Calu3 (cell line): ENCODE measurements at regions of chr13 and their contacts with region 1.

Region 1: DNA sequence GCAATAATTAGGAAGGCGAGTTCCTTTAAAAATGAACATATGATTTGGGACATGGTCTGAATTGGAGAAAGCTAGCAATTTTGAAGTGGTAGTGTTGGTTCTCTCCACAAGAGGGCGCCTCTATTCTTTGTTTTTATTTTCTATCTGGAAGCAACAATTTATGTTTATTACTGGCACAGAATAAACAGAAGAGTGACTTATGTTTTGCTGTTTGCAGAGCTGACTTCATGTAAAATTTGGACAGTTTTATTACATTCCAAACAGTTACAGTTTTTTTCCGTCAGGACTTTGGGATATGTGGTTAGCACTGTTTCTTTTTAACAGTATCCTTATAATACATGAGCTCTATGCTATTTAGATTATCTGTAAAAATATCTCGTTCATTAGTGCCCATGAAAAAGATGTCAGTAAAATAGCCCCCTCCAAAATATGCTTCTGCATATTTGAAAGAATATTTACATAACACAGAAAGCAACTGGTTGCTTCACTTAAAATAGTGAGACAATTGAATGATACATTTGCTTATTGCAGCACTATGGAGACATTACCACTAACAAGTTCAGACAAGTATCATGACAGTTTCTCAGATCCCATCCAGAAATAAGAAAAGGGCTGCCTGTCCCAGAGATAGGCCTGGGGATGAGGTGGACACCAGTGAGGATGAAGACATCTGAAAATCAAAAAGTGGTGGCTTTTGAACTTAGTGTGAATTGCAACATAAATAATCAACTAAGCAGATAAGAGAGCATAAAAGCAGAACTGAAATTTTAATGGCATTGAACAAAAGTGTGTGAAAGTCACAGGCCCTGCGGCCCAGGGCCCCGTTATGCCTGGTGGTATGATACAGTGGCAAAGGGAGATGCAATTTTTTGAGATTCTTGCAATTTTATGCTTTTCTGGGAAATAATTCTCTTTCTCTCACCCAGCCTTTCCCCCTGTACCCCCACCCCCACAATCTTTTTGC is 32.3 kb upstream of the FGF9 start:
- DNase-seq: peak; percentile 27
- H3K4me3 Mint-ChIP-seq: no peak overlapping the region
- H3K27ac Mint-ChIP-seq: no peak overlapping the region
- H3K4me1 Mint-ChIP-seq: peaks cover 25% of the 10 kb centered on the region
- H3K27me3 Mint-ChIP-seq: no peaks in the 10 kb centered on the region
- CTCF ChIP-seq: peak; percentile 15

Region 2: DNA sequence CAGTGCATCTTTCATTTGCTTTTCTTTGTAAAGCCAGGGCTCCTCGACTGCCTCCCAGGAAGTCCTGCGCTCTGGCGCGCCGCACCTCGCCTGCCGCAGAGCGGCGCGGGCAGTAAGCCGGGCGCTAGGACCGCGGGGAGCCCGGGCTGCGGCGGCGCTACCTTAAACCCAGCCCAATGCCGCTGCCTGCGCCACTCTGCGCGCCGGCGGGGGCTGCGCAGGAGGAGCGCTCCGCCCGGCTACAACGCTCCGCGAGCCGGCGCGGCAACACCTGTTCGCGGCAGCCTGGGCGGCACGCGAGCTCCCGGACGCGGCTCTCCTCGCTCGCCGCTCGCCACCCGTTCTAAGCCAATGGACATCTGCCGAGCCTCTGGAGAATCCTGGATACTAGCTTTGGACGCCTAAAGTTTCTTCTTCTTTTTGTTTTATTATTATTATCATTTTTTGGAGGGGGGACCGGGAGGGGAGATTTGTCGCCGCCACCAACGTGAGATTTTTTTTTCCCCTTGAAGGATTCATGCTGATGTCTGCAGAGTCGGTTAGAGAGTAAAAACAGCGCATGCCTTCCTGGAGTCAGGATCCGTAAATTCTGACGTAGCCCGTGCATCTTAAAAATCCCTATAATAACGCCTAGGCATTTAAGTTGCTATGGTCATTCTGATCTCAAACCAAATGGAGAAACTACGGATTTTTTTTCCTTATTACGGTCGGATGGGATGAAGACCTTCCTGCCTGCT is 32.5 kb after region 1 on chr13 and contains the start of gene FGF9:
- CTCF ChIA-PET with region 1: interaction called, 4 read pairs
- intact Hi-C with region 1: loop called (anchors 2 kb)
- DNase-seq: peak; percentile 68
- H3K4me3 Mint-ChIP-seq: peak within 1 kb of the TSS; percentile 84
- H3K27ac Mint-ChIP-seq: no peak within 1 kb of the TSS
- H3K4me1 Mint-ChIP-seq: peaks cover 10% of the 10 kb centered on the region
- H3K27me3 Mint-ChIP-seq: peaks cover 75% of the 10 kb centered on the region
- CTCF ChIP-seq: no peak
- total RNA-seq, gene FGF9: 0.32 TPM in 1 of 2 replicates, not detected in the other

Region 3: DNA sequence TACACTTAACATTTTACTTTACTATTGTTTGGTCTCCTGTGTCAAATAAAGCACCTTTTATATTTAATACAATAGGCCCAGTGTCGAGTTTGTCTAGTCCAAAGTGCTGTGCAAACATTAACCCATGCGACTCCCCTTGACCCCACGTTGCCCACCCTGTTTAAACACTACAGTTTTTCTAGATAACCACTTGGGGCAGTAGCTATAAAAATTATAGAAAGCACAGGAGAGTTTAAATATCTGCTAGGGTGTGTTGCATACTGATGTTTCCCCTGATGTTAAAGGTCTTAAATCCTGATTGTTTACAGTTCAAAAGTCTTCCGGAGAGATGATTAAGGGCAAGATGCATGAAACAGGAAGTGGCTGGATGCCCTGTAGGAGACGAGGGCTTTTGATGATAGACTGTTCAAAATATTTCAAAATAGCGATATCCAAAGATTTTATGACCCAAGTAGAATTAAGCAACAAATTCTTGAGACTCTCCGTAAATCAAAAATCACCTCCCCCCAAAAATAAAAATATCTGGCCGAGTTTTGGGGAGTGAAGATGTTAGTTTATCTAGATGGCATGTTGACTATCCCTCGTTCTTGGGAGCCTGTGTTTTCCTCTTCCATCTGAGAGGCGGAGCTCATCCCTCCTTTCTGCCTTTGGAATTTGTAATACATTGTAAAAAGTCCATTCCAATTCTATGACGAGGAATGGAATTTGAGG is 199.4 kb after region 1 on chr13:
- CTCF ChIA-PET with region 1: interaction called, 3 read pairs
- intact Hi-C with region 1: loop called (anchors 10 kb)
- DNase-seq: peak; percentile 10
- H3K4me3 Mint-ChIP-seq: peak overlapping the region; percentile 40
- H3K27ac Mint-ChIP-seq: peak overlapping the region; percentile 56
- H3K4me1 Mint-ChIP-seq: peaks cover 36% of the 10 kb centered on the region
- H3K27me3 Mint-ChIP-seq: no peaks in the 10 kb centered on the region
- CTCF ChIP-seq: no peak